Spleen (tissue), 13 donors: ENCODE measurements at regions of chr11 and their contacts with region 1.

Region 1: DNA sequence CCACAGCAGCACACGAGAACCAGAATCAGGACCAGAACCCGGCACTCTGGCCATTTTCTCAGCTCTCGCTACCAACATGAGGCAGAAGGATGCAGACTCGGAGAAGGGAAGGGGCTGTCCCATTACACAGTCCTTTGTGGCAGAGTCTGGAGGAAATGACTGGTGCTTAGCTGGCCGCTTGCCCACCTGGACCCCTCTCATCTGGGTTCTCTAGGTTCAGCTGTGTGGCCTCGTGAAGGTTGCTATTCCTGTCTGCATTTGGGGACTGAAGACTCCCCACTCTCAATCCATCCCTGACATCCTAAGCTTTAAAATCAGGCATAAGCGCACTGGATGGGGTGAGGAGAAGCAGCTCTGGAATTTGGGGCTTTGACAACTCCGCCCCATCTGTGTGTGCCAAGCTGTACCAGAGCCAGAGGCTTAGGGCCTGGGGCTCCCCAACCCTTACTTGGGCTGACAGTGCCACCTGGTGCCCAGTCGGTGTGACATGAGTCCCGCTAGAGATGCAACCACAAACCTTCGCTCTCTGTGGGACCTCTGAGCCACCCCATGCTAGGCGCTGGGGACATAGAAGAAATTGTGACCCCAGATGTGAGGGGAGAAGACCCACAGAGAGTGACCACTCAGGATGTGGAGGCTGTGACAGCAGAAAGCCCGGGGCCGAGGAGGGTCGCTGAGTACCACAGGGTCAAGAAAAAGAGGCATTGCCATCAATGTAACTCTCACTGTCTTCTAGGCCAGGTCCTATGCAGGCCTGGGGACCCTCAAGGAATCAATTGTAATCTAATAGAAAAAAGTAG is 35.9 kb upstream of the FCHSD2 start:
- DNase-seq: peak; percentile 96
- H3K4me3 ChIP-seq: no peak overlapping the region
- H3K27ac ChIP-seq: peak overlapping the region; percentile 0 to 79 (median 74)
- H3K4me1 ChIP-seq: peaks cover 26 to 63% (median 49%) of the 10 kb centered on the region in 6 donors
- H3K27me3 ChIP-seq: no peaks in the 10 kb centered on the region
- CTCF ChIP-seq: peak; percentile 67 to 97 (median 88)
- POLR2A ChIP-seq: no peak

Region 2: DNA sequence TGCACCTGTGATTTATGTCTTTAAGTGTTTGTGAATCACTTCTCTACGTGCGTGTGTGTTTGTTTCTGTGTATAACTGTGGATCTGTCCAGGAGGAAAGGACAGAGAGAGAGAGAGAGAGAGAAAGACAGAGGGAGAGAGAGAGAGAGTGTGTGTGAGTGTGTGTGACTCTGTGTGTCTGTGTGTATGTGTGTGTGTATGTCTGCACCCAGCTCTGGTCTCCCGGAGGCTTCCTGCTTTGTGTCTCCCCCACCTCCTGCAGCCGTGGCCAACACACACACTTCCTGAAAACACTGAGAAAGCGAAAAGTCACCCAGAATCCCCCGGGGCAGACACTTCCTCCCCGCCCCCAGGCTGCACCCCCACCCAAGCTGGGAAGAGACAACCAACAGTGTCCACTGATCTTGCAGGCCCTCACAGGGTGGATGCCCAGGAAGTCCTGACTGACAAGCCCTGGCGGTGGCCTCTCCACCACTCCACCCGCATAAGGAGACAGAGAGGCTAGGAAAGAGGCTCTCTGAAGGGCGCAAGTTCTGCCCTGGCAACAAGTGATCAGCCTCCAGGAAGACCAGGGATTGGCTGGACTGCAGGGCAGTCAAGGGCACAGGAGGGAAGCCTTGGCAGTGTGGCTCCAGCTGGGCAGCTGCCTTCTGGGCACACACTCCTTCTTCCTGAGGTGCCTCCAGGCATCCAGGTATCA is 455.8 kb before region 1 on chr11:
- intact Hi-C with region 1: loop called (anchors 10 kb)
- DNase-seq: peak; percentile 96
- H3K4me3 ChIP-seq: peak overlapping the region; percentile 52 to 81 (median 60)
- H3K27ac ChIP-seq: peak overlapping the region; percentile 85 to 97 (median 92)
- H3K4me1 ChIP-seq: peaks cover 52 to 100% (median 86%) of the 10 kb centered on the region in 6 donors
- H3K27me3 ChIP-seq: no peaks in the 10 kb centered on the region
- CTCF ChIP-seq: peak in 2 of 11 experiments; percentile 1 to 37
- POLR2A ChIP-seq: peak in 1 of 3 donors; percentile 16

Region 3: DNA sequence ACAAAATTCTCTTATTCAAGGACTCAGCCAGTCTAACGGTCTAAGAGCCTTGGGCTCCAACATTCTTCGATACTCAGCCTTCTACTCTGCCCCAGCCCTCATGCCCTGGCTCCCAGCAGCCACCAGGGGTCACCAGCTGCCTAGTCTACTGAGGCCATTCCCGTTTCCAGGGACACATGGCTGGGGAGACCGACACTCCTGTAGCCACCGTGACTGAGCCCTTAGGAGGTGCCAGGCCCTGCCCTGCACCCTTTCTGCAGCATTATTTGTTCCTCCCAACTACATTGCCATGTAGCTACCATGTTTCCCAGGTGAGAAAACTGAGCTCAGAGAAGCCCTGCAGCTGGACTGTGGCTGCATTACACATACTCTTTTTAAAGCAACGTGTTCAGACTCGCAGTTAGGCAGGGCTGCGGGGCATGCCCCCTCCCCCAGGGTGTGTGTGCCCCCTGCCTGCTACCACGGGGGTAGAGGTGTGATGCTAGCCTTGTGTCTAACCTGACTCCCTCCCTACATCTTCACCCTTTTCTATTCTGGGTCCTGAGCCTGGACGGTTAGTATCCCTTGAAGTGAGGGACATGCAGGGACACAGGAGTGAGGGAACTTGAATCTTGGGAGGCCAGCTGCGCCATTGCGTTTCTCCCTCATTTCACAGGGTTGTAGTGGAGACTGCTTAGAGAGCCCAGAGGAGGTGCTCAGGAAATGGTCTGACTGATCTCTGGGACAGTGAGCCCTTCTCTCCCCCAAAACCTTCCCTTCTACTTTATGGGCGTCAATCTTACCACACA is 346.3 kb before region 1 on chr11:
- intact Hi-C with region 1: loop called (anchors 2 kb)
- DNase-seq: peak; percentile 91
- H3K4me3 ChIP-seq: no peak overlapping the region
- H3K27ac ChIP-seq: peak overlapping the region; percentile 29 to 88 (median 82)
- H3K4me1 ChIP-seq: peaks cover 25 to 97% (median 69%) of the 10 kb centered on the region in 6 donors
- H3K27me3 ChIP-seq: no peaks in the 10 kb centered on the region
- CTCF ChIP-seq: peak; percentile 86 to 96 (median 92)
- POLR2A ChIP-seq: no peak

Region 4: DNA sequence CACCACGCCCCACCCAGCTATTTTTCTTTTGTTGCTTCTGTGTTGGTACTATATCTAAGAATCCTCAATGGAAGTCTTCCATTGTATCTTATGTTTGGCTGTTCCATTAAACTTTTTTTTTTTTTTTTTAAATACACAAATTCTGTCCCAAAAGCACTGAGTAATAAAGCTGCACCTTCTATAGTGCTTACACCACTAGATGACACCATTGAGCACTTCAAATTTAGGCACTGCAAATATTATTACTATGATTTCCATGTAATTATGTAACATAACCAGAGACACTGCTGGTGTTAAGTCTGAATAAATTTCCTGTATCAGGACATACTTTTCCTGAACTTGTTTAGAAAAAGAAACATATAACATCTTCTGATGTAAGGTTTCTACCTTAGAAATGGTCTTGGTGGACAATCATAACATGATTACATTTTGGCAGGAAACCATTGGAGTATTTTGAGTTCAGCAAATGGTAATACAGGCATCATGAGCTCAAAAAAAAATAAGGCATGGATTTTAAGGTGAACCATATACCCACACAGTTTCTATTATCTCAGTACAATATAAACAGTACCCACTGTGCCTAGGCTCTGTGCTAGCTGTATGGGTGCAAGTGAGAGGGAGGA is 253.3 kb before region 1 on chr11:
- intact Hi-C with region 1: loop called (anchors 5 kb)
- DNase-seq: no peak
- H3K4me3 ChIP-seq: no peak overlapping the region
- H3K27ac ChIP-seq: peak overlapping the region in 6 of 8 donors; percentile 9 to 54 (median 30)
- H3K4me1 ChIP-seq: peaks cover 0 to 84% (median 29%) of the 10 kb centered on the region in 6 donors
- H3K27me3 ChIP-seq: no peaks in the 10 kb centered on the region
- CTCF ChIP-seq: peak; percentile 21 to 64 (median 54)
- POLR2A ChIP-seq: no peak

Region 5: DNA sequence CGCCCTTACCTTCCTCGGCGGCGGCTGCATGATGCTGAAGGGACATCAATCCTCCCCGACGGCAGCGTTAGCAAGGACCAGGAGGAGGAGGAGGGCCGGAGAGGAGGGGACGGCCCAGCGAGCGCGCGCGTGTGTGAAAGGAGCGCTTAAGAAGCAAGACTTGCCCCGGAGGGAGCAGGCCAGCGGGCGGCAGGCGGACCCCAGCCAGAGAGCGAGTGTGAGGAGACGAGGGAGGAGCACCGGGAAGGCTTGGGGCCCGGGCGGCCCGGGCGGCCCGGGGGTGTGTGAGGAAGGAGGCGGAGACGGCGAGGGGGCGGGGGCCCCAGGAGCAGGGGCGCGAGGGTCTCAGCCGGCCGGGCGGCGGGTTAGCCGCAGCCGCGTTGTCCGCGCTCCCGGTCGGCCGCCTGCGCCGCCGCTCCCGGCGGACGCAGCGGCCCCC is 36.1 kb before region 1 on chr11:
- intact Hi-C with region 1: loop called (anchors 5 kb)
- DNase-seq: peak; percentile 95
- H3K4me3 ChIP-seq: peak overlapping the region; percentile 91 to 100 (median 96)
- H3K27ac ChIP-seq: peak overlapping the region; percentile 95 to 99 (median 98)
- H3K4me1 ChIP-seq: peaks cover 49 to 85% (median 74%) of the 10 kb centered on the region in 6 donors
- H3K27me3 ChIP-seq: no peaks in the 10 kb centered on the region
- CTCF ChIP-seq: no peak
- POLR2A ChIP-seq: no peak